ENCODE measurements at regions of chr5 and their contacts with region 1.

Region 1: DNA sequence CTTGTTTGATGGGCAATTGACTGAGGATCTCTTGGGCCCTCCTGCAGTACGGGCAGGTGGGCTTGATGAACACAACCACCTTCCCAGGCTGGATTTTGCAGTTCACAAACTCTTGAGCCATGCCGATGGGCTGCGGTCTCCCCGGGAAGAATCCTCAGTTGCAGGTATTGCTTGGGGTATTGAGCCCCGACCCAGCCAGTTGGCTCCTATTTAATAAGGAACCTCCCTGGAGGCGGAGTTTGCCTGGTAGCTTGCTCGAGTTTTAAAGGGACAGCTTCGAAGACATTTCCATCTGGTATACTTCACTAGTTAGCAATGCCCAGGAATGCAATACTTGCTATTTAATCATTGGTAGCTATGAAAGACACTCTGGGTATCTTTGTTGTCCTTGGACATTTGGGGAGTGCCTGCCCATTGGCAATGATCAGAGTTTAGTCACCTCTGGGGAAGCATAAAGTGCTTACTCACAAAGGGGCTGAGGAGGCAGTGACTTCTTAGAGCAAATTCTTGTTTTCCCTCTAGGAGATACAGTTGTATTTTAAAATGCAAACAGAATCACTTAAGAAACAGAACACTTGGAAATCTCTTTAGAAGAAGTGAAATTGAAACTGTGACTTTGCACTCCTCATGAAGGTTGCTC is at the start of gene GLRX:
- DNase-seq: peak in 8 of 9 donors; percentile 48 to 62 (median 58)
- ATAC-seq: peak; percentile 52
- H3K4me3 ChIP-seq: peak within 1 kb of the TSS; percentile 93
- H3K4me3 Mint-ChIP-seq: peak within 1 kb of the TSS; percentile 91 to 100 (median 99)
- H3K27ac ChIP-seq: peak within 1 kb of the TSS; percentile 84
- H3K27ac Mint-ChIP-seq: peak within 1 kb of the TSS; percentile 91 to 97 (median 95)
- H3K4me1 ChIP-seq: peaks cover 38% of the 10 kb centered on the region in 2 donors
- H3K4me1 Mint-ChIP-seq: peaks cover 53 to 78% (median 61%) of the 10 kb centered on the region in 7 donors
- H3K27me3 ChIP-seq: no peaks in the 10 kb centered on the region
- H3K27me3 Mint-ChIP-seq: no peaks in the 10 kb centered on the region
- total RNA-seq, gene GLRX: 26.3 to 89.5 (median 55.6) TPM

Region 2: DNA sequence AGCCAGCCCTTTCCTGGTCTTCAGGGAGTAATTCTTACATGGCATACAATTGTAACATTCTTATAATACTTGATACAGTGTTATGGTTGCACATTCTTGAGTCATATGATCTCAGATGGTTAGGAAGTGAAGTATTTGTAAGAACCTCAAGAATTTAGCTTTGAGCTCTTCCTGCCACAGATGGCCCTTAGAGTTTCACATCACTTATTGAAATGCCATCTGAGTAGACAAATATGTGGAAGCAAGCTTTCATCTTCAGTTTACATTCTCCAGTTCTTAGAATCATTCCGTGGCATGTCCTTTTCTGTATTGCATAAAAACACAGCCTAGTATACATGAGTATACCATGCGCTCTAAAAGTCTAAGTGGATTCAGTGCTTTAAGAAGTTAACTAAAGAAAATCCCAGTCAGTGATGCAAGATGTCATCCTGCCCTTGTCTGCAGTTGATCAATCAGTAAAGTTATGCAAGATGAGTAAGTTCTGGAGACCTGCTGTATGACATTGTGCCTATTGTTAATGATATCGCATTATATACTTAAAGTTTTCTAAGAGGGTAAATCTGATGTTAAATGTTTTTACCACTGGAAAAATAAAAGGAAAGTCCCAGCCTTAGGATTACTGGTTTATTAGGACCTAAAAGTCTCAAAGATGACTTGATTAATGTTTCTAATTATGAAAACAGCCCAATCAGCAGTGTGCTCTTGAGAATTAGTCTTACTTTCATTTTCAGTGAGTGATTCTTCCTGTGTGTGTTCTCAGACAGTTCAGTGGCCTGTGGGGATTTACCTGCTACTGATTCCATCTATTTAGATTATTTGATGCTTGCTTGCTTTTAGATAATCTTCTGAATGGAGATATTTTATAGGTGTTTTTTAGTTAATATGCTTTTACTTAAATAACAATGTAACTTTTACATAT is 62.1 kb before region 1 on chr5:
- CTCF ChIA-PET with region 1: no interaction called
- POLR2A ChIA-PET with region 1: no interaction called
- intact Hi-C with region 1: loop called in 1 of 2 experiments (anchors 2 kb)
- DNase-seq: peak in 7 of 9 donors; percentile 3 to 45 (median 32)
- ATAC-seq: peak; percentile 83
- H3K4me3 ChIP-seq: peak overlapping the region; percentile 50
- H3K4me3 Mint-ChIP-seq: peak overlapping the region; percentile 70 to 86 (median 82)
- H3K27ac ChIP-seq: peak overlapping the region; percentile 58
- H3K27ac Mint-ChIP-seq: peak overlapping the region; percentile 75 to 92 (median 90)
- H3K4me1 ChIP-seq: peaks cover 0 to 27% of the 10 kb centered on the region in 2 donors
- H3K4me1 Mint-ChIP-seq: peaks cover 11 to 46% (median 32%) of the 10 kb centered on the region in 7 donors
- H3K27me3 ChIP-seq: no peaks in the 10 kb centered on the region
- H3K27me3 Mint-ChIP-seq: peaks cover 0 to 44% (median 0%) of the 10 kb centered on the region in 5 donors

Region 3: GRCh38 chr5:95788493-95788892 is 34.2 kb before region 1 on chr5:
- CTCF ChIA-PET with region 1: interaction called, 5 read pairs
- POLR2A ChIA-PET with region 1: interaction called, 6 read pairs
- intact Hi-C with region 1: loop called in 1 of 2 experiments (anchors 2 kb)
- DNase-seq: no peak
- ATAC-seq: no peak
- H3K4me3 ChIP-seq: no peak overlapping the region
- H3K4me3 Mint-ChIP-seq: no peak overlapping the region
- H3K27ac ChIP-seq: no peak overlapping the region
- H3K27ac Mint-ChIP-seq: no peak overlapping the region
- H3K4me1 ChIP-seq: no peaks in the 10 kb centered on the region
- H3K4me1 Mint-ChIP-seq: peaks cover 0 to 9% (median 5%) of the 10 kb centered on the region in 7 donors
- H3K27me3 ChIP-seq: no peaks in the 10 kb centered on the region
- H3K27me3 Mint-ChIP-seq: peaks cover 0 to 25% (median 0%) of the 10 kb centered on the region in 5 donors

Region 4: DNA sequence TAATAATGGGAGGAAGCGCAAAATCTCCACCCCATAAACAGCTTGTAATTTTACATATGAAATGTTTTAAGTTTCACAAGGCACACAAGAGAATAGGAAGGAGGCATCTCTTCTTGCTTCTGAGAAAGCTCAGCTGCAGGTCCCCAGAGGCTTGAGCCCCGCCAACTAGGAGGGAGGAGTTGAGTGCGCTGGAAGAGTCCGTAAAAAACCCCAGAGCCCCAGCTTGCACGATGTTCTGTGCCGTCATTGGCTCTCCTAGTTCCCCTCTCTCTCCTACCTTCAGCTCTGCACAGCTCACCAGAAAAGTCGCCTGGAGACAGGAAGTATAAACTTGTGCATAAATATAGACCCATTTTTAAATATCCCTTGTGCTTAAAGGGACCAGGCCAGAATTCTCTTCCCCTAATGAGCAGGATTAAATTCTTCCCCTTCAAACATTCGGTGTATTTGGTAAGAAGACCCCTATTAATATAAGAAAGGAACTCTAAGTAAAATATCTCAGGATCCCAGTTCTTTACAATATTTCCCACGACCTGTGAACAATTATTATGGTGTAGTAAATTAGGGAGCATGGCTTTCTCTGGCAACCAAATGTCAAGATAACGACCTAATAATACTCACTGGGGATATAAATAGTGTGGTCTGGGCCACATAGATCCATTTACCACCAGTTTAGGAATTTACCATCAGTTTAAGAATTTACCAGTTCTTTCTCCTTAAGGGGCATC is 13.8 kb before region 1 on chr5:
- CTCF ChIA-PET with region 1: interaction called, 68 read pairs
- POLR2A ChIA-PET with region 1: interaction called, 138 read pairs
- intact Hi-C with region 1: loop called (anchors 1 kb)
- DNase-seq: peak; percentile 54 to 92 (median 88)
- ATAC-seq: peak; percentile 100
- H3K4me3 ChIP-seq: peak overlapping the region; percentile 24
- H3K4me3 Mint-ChIP-seq: peak overlapping the region; percentile 21 to 84 (median 76)
- H3K27ac ChIP-seq: peak overlapping the region; percentile 75
- H3K27ac Mint-ChIP-seq: peak overlapping the region; percentile 76 to 98 (median 90)
- H3K4me1 ChIP-seq: peaks cover 31 to 49% of the 10 kb centered on the region in 2 donors
- H3K4me1 Mint-ChIP-seq: peaks cover 53 to 71% (median 64%) of the 10 kb centered on the region in 7 donors
- H3K27me3 ChIP-seq: no peaks in the 10 kb centered on the region
- H3K27me3 Mint-ChIP-seq: no peaks in the 10 kb centered on the region

Region 5: DNA sequence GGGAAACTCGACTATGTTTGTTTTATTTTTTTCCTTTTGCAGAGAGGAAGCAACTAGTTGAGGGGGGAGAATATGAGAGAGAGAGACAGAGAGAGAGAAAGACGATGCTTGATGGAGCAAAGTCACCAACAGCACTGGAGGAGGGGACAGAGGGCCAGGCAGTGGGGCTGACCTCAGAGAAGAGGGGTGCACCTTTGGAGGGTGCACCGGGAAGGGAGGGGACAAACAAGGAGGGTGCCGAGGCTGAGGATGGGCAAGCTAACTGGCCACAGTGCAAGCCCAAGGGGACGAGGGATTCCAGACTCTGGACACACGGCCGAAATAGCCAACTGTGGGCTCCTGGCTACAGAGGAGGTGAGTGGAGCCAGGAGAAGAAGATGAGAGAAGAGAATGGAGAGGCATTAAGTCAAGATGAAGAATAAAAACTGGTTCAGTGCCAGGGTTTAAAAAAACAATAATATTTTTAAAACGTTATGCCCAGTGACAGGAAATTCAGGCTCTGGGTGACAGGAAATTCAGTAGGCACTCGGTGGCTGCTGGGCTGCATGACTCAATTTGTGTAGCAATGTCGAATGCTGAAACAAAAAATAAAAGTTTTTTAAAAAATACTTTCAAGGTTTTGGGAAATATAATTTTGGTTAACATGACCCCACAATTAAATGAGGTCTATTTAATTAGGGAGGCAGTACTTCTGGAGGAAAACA is 13.2 kb after region 1 on chr5:
- CTCF ChIA-PET with region 1: interaction called, 32 read pairs
- POLR2A ChIA-PET with region 1: interaction called, 157 read pairs
- intact Hi-C with region 1: loop called (anchors 1 kb)
- DNase-seq: peak in 4 of 9 donors; percentile 27 to 38 (median 36)
- ATAC-seq: no peak
- H3K4me3 ChIP-seq: peak overlapping the region; percentile 60
- H3K4me3 Mint-ChIP-seq: peak overlapping the region; percentile 85 to 96 (median 92)
- H3K27ac ChIP-seq: peak overlapping the region; percentile 74
- H3K27ac Mint-ChIP-seq: peak overlapping the region; percentile 75 to 98 (median 92)
- H3K4me1 ChIP-seq: peaks cover 15 to 21% of the 10 kb centered on the region in 2 donors
- H3K4me1 Mint-ChIP-seq: peaks cover 36 to 63% (median 61%) of the 10 kb centered on the region in 7 donors
- H3K27me3 ChIP-seq: no peaks in the 10 kb centered on the region
- H3K27me3 Mint-ChIP-seq: no peaks in the 10 kb centered on the region

Region 6: GRCh38 chr5:96816411-96816939 is 993.8 kb after region 1 on chr5:
- CTCF ChIA-PET with region 1: no interaction called
- POLR2A ChIA-PET with region 1: no interaction called
- intact Hi-C with region 1: loop called in 1 of 2 experiments (anchors 10 kb)
- DNase-seq: peak in 8 of 9 donors; percentile 37 to 85 (median 76)
- ATAC-seq: peak; percentile 91
- H3K4me3 ChIP-seq: peak overlapping the region; percentile 64
- H3K4me3 Mint-ChIP-seq: peak overlapping the region; percentile 65 to 93 (median 82)
- H3K27ac ChIP-seq: peak overlapping the region; percentile 70
- H3K27ac Mint-ChIP-seq: peak overlapping the region; percentile 74 to 100 (median 94)
- H3K4me1 ChIP-seq: peaks cover 29 to 59% of the 10 kb centered on the region in 2 donors
- H3K4me1 Mint-ChIP-seq: peaks cover 51 to 95% (median 89%) of the 10 kb centered on the region in 7 donors
- H3K27me3 ChIP-seq: no peaks in the 10 kb centered on the region
- H3K27me3 Mint-ChIP-seq: no peaks in the 10 kb centered on the region

Region 7: GRCh38 chr5:96876292-96876850 is 1053.7 kb after region 1 on chr5 and contains the start of gene ERAP2:
- CTCF ChIA-PET with region 1: no interaction called
- POLR2A ChIA-PET with region 1: no interaction called
- intact Hi-C with region 1: loop called in 1 of 2 experiments (anchors 10 kb)
- DNase-seq: peak in 7 of 9 donors; percentile 53 to 73 (median 64)
- ATAC-seq: peak; percentile 79
- H3K4me3 ChIP-seq: peak within 1 kb of the TSS; percentile 85
- H3K4me3 Mint-ChIP-seq: peak within 1 kb of the TSS; percentile 81 to 99 (median 96)
- H3K27ac ChIP-seq: peak within 1 kb of the TSS; percentile 80
- H3K27ac Mint-ChIP-seq: peak within 1 kb of the TSS; percentile 91 to 99 (median 97)
- H3K4me1 ChIP-seq: peaks cover 26 to 56% of the 10 kb centered on the region in 2 donors
- H3K4me1 Mint-ChIP-seq: peaks cover 44 to 76% (median 73%) of the 10 kb centered on the region in 7 donors
- H3K27me3 ChIP-seq: no peaks in the 10 kb centered on the region
- H3K27me3 Mint-ChIP-seq: no peaks in the 10 kb centered on the region
- total RNA-seq, gene ERAP2: 42.5 to 158 (median 97.2) TPM